ENCODE measurements at regions of chr14 and their contacts with region 1.

Region 1: GRCh38 chr14:101761032-101761880 is at the start of gene PPP2R5C:
- DNase-seq: peak; percentile 93
- ATAC-seq: peak; percentile 63
- H3K4me3 ChIP-seq: peak within 1 kb of the TSS; percentile 73 to 96 (median 87)
- H3K4me3 Mint-ChIP-seq: peak within 1 kb of the TSS; percentile 94
- H3K27ac ChIP-seq: peak within 1 kb of the TSS; percentile 66 to 78
- H3K27ac Mint-ChIP-seq: peak within 1 kb of the TSS; percentile 92
- H3K4me1 ChIP-seq: peaks cover 11 to 12% of the 10 kb centered on the region in 2 donors
- H3K4me1 Mint-ChIP-seq: peaks cover 14% of the 10 kb centered on the region
- H3K27me3 ChIP-seq: no peaks in the 10 kb centered on the region
- H3K27me3 Mint-ChIP-seq: no peaks in the 10 kb centered on the region
- CTCF ChIP-seq: no peak
- total RNA-seq, gene PPP2R5C: 330 and 337 TPM in 2 replicates

Region 2: DNA sequence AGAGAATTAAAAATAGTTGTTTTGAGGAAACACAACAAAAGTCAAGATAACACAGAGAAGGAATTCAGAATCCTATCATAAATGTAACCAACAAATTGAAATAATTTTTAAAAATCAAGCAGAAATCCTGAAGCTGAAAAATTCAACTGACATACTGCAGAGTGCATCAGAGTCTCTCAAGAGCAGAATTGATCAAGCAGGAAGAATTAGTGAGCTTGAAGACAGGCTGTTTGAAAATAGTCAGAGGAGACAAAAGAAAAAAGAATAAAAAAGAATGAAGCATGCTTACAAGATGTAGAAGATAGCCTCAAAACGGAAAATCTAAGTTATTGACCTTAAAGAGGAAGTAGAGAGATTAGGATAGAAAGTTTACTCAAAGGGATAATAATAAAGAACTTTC is 65.6 kb before region 1 on chr14:
- CTCF ChIA-PET with region 1: no interaction called
- POLR2A ChIA-PET with region 1: no interaction called
- intact Hi-C with region 1: no loop called
- DNase-seq: no peak
- ATAC-seq: no peak
- H3K4me3 ChIP-seq: no peak overlapping the region
- H3K4me3 Mint-ChIP-seq: no peak overlapping the region
- H3K27ac ChIP-seq: no peak overlapping the region
- H3K27ac Mint-ChIP-seq: no peak overlapping the region
- H3K4me1 ChIP-seq: no peaks in the 10 kb centered on the region
- H3K4me1 Mint-ChIP-seq: no peaks in the 10 kb centered on the region
- H3K27me3 ChIP-seq: peaks cover 0 to 15% (median 3%) of the 10 kb centered on the region in 4 experiments
- H3K27me3 Mint-ChIP-seq: peaks cover 51% of the 10 kb centered on the region
- CTCF ChIP-seq: no peak

Region 3: DNA sequence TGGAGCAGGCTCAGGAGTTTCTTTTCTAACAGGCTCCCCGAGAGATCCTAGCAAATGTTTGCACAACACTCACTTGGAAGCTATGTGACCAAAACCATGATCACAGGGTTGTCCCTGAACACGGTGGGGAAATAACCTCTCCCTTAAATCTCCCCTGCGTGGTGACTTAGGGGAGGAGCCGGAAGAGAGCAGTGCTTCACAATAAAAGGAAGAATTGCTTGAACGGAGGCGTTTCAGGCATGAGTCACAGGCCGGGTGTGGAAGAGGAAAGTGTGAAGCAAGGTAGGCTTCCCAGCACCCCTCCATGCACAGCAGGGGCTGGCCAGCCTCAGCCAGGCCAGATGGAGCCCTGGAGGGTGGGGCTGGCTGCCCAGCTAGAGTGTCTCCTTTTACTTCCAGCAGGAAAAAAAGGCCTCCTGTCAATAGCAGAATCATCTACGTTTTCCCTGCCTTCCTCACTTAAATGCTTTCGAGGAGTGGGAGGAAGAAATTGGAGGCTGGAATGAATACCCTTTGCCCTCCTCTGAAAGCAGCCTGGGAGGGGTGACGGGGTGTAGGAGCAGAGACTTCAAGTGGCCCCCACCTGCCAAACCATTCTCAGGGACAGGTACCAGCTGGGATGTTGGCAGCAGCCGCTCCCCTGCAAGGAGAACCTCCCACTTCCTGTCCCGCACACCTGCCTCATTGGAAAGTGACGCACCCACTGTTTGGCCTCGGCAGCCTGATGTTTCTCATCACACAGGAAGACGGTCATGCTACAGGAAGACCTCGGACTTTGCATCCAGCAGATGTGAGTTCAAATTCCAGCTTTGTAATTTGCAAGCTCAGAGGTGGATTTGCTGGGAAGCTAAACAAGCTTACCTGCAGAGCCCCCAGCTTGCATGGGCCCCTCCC is 29.8 kb before region 1 on chr14:
- CTCF ChIA-PET with region 1: no interaction called
- POLR2A ChIA-PET with region 1: no interaction called
- intact Hi-C with region 1: loop called (anchors 1 kb)
- DNase-seq: peak; percentile 70
- ATAC-seq: peak; percentile 95
- H3K4me3 ChIP-seq: no peak overlapping the region
- H3K4me3 Mint-ChIP-seq: peak overlapping the region; percentile 62
- H3K27ac ChIP-seq: no peak overlapping the region
- H3K27ac Mint-ChIP-seq: peak overlapping the region; percentile 71
- H3K4me1 ChIP-seq: peaks cover 13 to 18% of the 10 kb centered on the region in 2 donors
- H3K4me1 Mint-ChIP-seq: peaks cover 16% of the 10 kb centered on the region
- H3K27me3 ChIP-seq: no peaks in the 10 kb centered on the region
- H3K27me3 Mint-ChIP-seq: no peaks in the 10 kb centered on the region
- CTCF ChIP-seq: no peak

Measured in B cell (primary cell).